ENCODE measurements at regions of chr12 and their contacts with region 1.

Region 1: GRCh38 chr12:26153421-26154154 is 28.8 kb upstream of the BHLHE41 start:
- DNase-seq: no peak
- ATAC-seq: no peak
- H3K4me3 Mint-ChIP-seq: no peak overlapping the region
- H3K27ac Mint-ChIP-seq: peak overlapping the region; percentile 27
- H3K4me1 Mint-ChIP-seq: peaks cover 77% of the 10 kb centered on the region
- H3K27me3 Mint-ChIP-seq: no peaks in the 10 kb centered on the region
- CTCF ChIP-seq: no peak

Region 2: GRCh38 chr12:26113853-26114719 is 39.5 kb before region 1 on chr12:
- CTCF ChIA-PET with region 1: interaction called, 74 read pairs
- POLR2A ChIA-PET with region 1: interaction called, 189 read pairs
- intact Hi-C with region 1: loop called (anchors 1 kb)
- DNase-seq: peak; percentile 77
- ATAC-seq: peak; percentile 80
- H3K4me3 Mint-ChIP-seq: peak overlapping the region; percentile 85
- H3K27ac Mint-ChIP-seq: peak overlapping the region; percentile 92
- H3K4me1 Mint-ChIP-seq: peaks cover 58% of the 10 kb centered on the region
- H3K27me3 Mint-ChIP-seq: no peaks in the 10 kb centered on the region
- CTCF ChIP-seq: no peak

Region 3: DNA sequence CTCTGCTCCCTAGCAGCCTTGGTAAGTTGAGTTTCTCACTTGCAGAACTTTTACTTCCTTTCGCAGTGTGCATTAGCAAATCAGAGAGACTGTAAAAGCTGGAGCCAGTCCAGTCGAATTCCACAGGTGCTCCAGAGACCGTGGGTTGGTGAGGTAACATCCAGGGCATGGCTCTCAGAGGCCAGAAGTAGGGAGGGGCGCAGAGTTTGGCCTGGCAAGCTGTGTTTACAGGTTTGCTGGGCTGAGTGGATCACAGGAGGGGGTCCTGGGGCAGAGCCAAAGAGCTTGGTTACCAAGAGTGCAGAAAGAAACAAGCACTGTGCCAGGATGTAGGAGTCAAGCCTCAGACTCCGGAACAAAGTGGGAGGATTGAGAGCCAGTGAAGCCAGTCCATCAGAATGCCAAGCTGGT is 18.6 kb before region 1 on chr12:
- CTCF ChIA-PET with region 1: interaction called, 3 read pairs
- POLR2A ChIA-PET with region 1: interaction called, 16 read pairs
- intact Hi-C with region 1: no loop called
- DNase-seq: no peak
- ATAC-seq: no peak
- H3K4me3 Mint-ChIP-seq: no peak overlapping the region
- H3K27ac Mint-ChIP-seq: no peak overlapping the region
- H3K4me1 Mint-ChIP-seq: peaks cover 62% of the 10 kb centered on the region
- H3K27me3 Mint-ChIP-seq: no peaks in the 10 kb centered on the region
- CTCF ChIP-seq: no peak

Region 4: GRCh38 chr12:26195641-26196420 is 42.2 kb after region 1 on chr12:
- CTCF ChIA-PET with region 1: interaction called, 4 read pairs
- POLR2A ChIA-PET with region 1: interaction called, 44 read pairs
- intact Hi-C with region 1: loop called (anchors 2 kb)
- DNase-seq: peak; percentile 46
- ATAC-seq: peak; percentile 82
- H3K4me3 Mint-ChIP-seq: peak overlapping the region; percentile 94
- H3K27ac Mint-ChIP-seq: peak overlapping the region; percentile 87
- H3K4me1 Mint-ChIP-seq: peaks cover 13% of the 10 kb centered on the region
- H3K27me3 Mint-ChIP-seq: no peaks in the 10 kb centered on the region
- CTCF ChIP-seq: no peak

Region 5: GRCh38 chr12:26266881-26267280 is 113.3 kb after region 1 on chr12:
- CTCF ChIA-PET with region 1: no interaction called
- POLR2A ChIA-PET with region 1: no interaction called
- intact Hi-C with region 1: no loop called
- DNase-seq: no peak
- ATAC-seq: no peak
- H3K4me3 Mint-ChIP-seq: no peak overlapping the region
- H3K27ac Mint-ChIP-seq: no peak overlapping the region
- H3K4me1 Mint-ChIP-seq: peaks cover 7% of the 10 kb centered on the region
- H3K27me3 Mint-ChIP-seq: no peaks in the 10 kb centered on the region
- CTCF ChIP-seq: no peak

Region 6: GRCh38 chr12:26298785-26299621 is 145.4 kb after region 1 on chr12:
- CTCF ChIA-PET with region 1: no interaction called
- POLR2A ChIA-PET with region 1: interaction called, 12 read pairs
- intact Hi-C with region 1: loop called (anchors 1 kb)
- DNase-seq: no peak
- ATAC-seq: peak; percentile 98
- H3K4me3 Mint-ChIP-seq: peak overlapping the region; percentile 63
- H3K27ac Mint-ChIP-seq: peak overlapping the region; percentile 80
- H3K4me1 Mint-ChIP-seq: peaks cover 34% of the 10 kb centered on the region
- H3K27me3 Mint-ChIP-seq: no peaks in the 10 kb centered on the region
- CTCF ChIP-seq: no peak

Region 7: GRCh38 chr12:26318661-26319068 is 165.1 kb after region 1 on chr12:
- CTCF ChIA-PET with region 1: interaction called, 5 read pairs
- POLR2A ChIA-PET with region 1: interaction called, 14 read pairs
- intact Hi-C with region 1: loop called (anchors 1 kb)
- DNase-seq: peak; percentile 50
- ATAC-seq: peak; percentile 85
- H3K4me3 Mint-ChIP-seq: peak overlapping the region; percentile 11
- H3K27ac Mint-ChIP-seq: peak overlapping the region; percentile 83
- H3K4me1 Mint-ChIP-seq: peaks cover 39% of the 10 kb centered on the region
- H3K27me3 Mint-ChIP-seq: no peaks in the 10 kb centered on the region
- CTCF ChIP-seq: no peak

Measured in activated B cell treated with CpG ODN at 0.5 μM for 24 hours (primary cell).